ENCODE measurements at regions of chr19 and their contacts with region 1.

Region 1: GRCh38 chr19:45370410-45371204 is at the start of gene ERCC2:
- DNase-seq: peak; percentile 98 to 99
- ATAC-seq: peak; percentile 100
- H3K4me3 ChIP-seq: peak within 1 kb of the TSS; percentile 74 to 98 (median 94)
- H3K27ac ChIP-seq: peak within 1 kb of the TSS; percentile 76 to 87 (median 81)
- H3K4me1 ChIP-seq: peaks cover 0 to 15% of the 10 kb centered on the region in 2 donors
- H3K27me3 ChIP-seq: no peaks in the 10 kb centered on the region
- CTCF ChIP-seq: no peak
- POLR2A ChIP-seq: no peak
- total RNA-seq, gene ERCC2: 4.8 to 8.9 (median 7.2) TPM

Region 2: DNA sequence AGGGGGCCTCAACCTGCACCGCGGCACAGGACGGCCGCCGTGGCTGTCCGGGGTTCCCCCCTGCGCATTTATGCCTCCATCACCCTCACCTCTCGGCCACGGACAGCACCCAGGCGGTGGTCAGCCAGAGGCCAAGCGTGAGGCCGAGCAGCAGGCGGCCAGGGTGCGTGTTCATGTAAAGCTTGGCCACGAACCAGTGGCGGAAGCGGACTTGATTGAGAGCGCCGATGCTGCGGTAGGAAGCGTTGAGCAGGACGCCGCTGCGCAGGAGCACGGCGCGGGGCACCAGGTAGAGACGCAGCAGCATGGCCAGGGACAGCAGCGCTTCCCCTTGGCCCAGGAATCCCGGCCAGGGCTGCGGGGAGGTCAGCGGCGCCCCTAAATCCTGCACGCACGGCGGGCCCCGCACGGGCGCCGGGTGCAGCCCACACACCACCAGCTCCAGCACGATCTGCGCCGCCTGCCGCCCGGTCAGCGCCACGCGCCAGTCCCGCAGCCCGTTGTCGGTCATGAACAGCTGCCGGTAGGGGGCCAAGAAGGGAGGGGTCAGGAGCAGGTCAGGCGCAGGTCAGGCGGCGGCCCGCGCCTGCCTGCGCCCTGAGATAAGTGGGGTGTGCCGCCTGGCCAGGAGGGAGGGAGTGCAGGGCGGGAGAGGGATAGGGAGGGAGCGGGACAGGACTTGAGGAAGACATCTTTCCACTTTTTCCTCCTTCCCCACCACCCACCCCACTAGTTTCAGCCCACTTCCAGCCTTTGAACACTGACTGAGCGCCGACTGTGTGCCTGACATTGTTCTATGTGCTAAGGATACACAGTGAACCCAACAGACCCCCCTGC is 1596.3 kb before region 1 on chr19:
- in situ Hi-C with region 1: no loop called
- intact Hi-C with region 1: no loop called
- DNase-seq: peak; percentile 38 to 43
- ATAC-seq: peak; percentile 74 to 78
- H3K4me3 ChIP-seq: peak overlapping the region; percentile 2 to 54 (median 38)
- H3K27ac ChIP-seq: no peak overlapping the region
- H3K4me1 ChIP-seq: peaks cover 6 to 7% of the 10 kb centered on the region in 2 donors
- H3K27me3 ChIP-seq: peaks cover 0 to 24% (median 6%) of the 10 kb centered on the region in 3 donors
- CTCF ChIP-seq: peak in 4 of 5 experiments; percentile 19 to 70 (median 34)
- POLR2A ChIP-seq: no peak

Region 3: GRCh38 chr19:45405435-45406225 is 35.0 kb after region 1 on chr19:
- in situ Hi-C with region 1: no loop called
- intact Hi-C with region 1: loop called (anchors 2 kb)
- DNase-seq: peak; percentile 82 to 85
- ATAC-seq: peak; percentile 76 to 78
- H3K4me3 ChIP-seq: peak overlapping the region; percentile 58 to 94 (median 80)
- H3K27ac ChIP-seq: peak overlapping the region; percentile 88 to 96 (median 92)
- H3K4me1 ChIP-seq: peaks cover 22 to 23% of the 10 kb centered on the region in 2 donors
- H3K27me3 ChIP-seq: peaks cover 5 to 10% (median 9%) of the 10 kb centered on the region in 3 donors
- CTCF ChIP-seq: no peak
- POLR2A ChIP-seq: peak in 1 of 2 donors; percentile 22

Measured in gastrocnemius medialis (tissue), 4 donors.